ENCODE measurements at regions of chr3 and their contacts with region 1.

Region 1: GRCh38 chr3:167929968-167930367 is 165.8 kb downstream of the GOLIM4 start:
- DNase-seq: no peak
- H3K4me3 ChIP-seq: no peak overlapping the region
- H3K27ac ChIP-seq: no peak overlapping the region
- H3K4me1 ChIP-seq: peaks cover 15% of the 10 kb centered on the region
- H3K27me3 ChIP-seq: no peaks in the 10 kb centered on the region
- CTCF ChIP-seq: no peak

Region 2: GRCh38 chr3:167394003-167394402 is 536.0 kb before region 1 on chr3:
- intact Hi-C with region 1: no loop called
- DNase-seq: no peak
- H3K4me3 ChIP-seq: no peak overlapping the region
- H3K27ac ChIP-seq: no peak overlapping the region
- H3K4me1 ChIP-seq: no peaks in the 10 kb centered on the region
- H3K27me3 ChIP-seq: no peaks in the 10 kb centered on the region
- CTCF ChIP-seq: no peak

Region 3: DNA sequence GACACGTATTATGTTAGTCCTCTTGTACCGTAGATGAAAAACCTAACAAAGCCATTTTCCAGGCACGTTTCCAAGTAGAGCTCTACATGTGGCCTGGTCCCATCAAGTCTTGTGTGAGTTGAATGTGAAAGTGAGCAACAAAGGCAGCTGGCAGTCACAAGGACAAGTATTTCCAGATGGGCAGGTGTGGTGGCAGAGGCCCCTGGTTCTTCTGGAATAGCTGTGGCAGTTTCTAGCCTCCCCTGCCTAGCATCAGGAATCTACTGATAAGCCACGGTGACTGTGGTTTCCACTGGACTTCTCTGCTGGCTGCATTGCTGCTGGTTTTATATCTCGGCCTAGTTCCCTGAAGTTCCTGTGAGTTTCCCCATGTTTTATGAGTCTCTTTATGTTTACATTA is 48.1 kb after region 1 on chr3:
- intact Hi-C with region 1: no loop called
- DNase-seq: no peak
- H3K4me3 ChIP-seq: no peak overlapping the region
- H3K27ac ChIP-seq: no peak overlapping the region
- H3K4me1 ChIP-seq: no peaks in the 10 kb centered on the region
- H3K27me3 ChIP-seq: no peaks in the 10 kb centered on the region
- CTCF ChIP-seq: no peak

Region 4: GRCh38 chr3:168040607-168041208 is 110.7 kb after region 1 on chr3:
- intact Hi-C with region 1: loop called (anchors 5 kb)
- DNase-seq: no peak
- H3K4me3 ChIP-seq: no peak overlapping the region
- H3K27ac ChIP-seq: no peak overlapping the region
- H3K4me1 ChIP-seq: peaks cover 31% of the 10 kb centered on the region
- H3K27me3 ChIP-seq: no peaks in the 10 kb centered on the region
- CTCF ChIP-seq: peak; percentile 74